HEK293T (cell line): ENCODE measurements at regions of chr9 and their contacts with region 1.

Region 1: DNA sequence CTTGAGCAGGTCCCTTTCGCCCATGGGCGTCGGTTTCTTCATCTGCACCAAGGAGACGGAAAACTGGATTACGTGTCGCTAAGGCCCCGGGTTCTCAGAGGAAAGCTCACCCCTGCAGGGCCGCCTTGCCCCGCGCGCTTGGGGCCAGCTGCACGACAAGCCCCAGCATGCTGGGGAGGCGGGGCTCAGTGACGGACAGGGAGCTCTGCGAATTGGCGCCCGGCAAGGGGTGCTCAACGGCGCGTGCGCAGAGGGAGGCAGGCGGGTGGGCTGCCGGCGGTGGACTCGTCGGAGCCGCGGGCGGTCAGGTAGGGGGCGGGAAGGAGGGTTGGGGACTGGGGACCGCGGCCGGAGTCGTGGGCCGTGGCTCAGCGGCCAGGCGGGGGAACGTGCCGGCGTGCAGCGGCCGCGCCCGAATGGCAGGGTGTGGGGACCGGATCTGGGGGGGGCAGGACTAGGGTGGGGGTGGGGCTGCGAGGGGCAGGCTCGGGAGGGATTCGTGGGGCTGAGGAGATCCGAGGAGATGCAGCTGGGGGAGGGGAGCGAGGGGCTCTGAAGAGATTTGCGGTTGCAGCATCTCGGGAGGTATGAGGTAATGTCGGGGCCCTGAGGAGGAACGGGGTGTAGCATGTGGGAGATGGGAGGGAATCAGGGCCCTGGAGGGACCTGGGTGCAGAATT is at the start of gene TRIM32:
- DNase-seq: peak; percentile 95

Region 2: DNA sequence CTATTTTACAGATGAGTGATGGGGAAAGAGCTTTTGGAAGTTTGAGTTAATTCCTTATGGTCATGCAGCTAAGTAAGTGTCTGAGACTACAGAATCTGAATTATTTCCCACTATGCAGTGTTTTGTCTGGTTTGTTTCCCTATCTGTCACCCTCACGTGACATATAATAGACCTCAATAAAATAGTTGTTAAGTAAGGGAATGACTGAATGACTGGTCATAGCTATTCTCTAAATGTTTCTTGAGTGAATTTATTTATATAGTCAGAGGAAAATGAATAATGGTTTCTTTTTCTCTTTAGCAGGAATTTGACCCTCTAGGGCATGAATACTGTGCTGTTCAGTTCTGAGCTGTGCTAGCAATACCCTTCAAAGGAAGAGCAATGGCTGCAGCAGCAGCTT is 10.1 kb after region 1 on chr9:
- CTCF ChIA-PET with region 1: no interaction called
- POLR2A ChIA-PET with region 1: interaction called, 12 read pairs
- DNase-seq: no peak